ENCODE measurements at regions of chr9 and their contacts with region 1.

Region 1: DNA sequence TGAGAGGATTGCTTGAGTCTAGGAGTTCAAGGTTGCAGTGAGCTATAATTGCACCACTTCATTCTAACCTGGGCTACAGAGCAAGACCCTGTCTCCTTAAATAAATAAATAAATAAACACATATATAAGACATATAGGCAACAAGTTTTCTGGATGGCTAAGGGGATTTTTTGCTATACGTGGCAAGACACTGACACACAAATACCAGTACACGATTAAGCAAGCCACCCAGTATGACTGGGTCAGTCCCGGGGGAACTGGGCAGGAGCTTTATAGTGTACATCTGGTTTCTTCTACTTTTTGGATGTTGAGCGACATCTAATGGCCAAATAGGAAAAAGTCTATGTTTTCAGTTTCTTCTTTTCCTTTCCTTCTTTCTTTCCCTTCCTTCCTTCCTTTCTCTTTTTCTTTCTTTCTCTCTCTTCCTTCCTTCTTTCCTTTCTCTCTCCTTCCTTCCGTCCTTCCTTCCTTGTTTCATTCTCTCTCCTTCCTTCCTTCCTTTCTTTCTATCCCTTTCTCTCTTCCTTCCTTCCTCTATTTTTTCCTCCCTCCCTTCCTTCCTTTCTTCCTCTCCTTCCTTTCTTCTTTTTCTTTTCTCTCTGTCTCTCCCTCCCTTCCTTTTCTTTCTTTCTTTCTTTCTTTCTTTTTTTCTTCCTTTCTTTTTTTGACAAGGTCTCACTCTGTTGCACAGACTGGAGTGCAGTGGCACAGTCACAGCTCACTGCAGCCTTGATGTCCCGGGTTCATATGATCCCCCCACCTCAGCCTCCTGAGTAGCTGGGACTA is 47.0 kb upstream of the PLIN2 start:
- DNase-seq: peak; percentile 69
- ATAC-seq: peak; percentile 96
- H3K4me3 ChIP-seq: peak overlapping the region; percentile 61
- H3K27ac ChIP-seq: no peak overlapping the region
- H3K4me1 ChIP-seq: 0 out of 2 replicates have a peak, but pooled peaks cover 8% of the 10 kb centered on the region
- H3K27me3 ChIP-seq: no peaks in the 10 kb centered on the region
- CTCF ChIP-seq: peak; percentile 57

Region 2: GRCh38 chr9:18849890-18850677 is 324.2 kb before region 1 on chr9:
- CTCF ChIA-PET with region 1: no interaction called
- POLR2A ChIA-PET with region 1: no interaction called
- intact Hi-C with region 1: no loop called
- DNase-seq: no peak
- ATAC-seq: no peak
- H3K4me3 ChIP-seq: no peak overlapping the region
- H3K27ac ChIP-seq: no peak overlapping the region
- H3K4me1 ChIP-seq: no peaks in the 10 kb centered on the region
- H3K27me3 ChIP-seq: no peaks in the 10 kb centered on the region
- CTCF ChIP-seq: no peak

Region 3: GRCh38 chr9:19048966-19049916 is 125.1 kb before region 1 on chr9 and contains the start of gene RRAGA:
- CTCF ChIA-PET with region 1: interaction called, 4 read pairs
- POLR2A ChIA-PET with region 1: interaction called, 3 read pairs
- intact Hi-C with region 1: loop called (anchors 1 kb)
- DNase-seq: peak; percentile 92
- ATAC-seq: peak; percentile 83
- H3K4me3 ChIP-seq: peak within 1 kb of the TSS; percentile 89
- H3K27ac ChIP-seq: peak within 1 kb of the TSS; percentile 68
- H3K4me1 ChIP-seq: peaks cover 15% of the 10 kb centered on the region; the same call in 1 of the 2 replicates
- H3K27me3 ChIP-seq: no peaks in the 10 kb centered on the region
- CTCF ChIP-seq: peak; percentile 76
- total RNA-seq, gene RRAGA: 13.0 and 16.8 TPM in 2 replicates

Region 4: GRCh38 chr9:19102631-19103345 is 71.5 kb before region 1 on chr9 and contains the start of gene HAUS6:
- CTCF ChIA-PET with region 1: no interaction called
- POLR2A ChIA-PET with region 1: no interaction called
- intact Hi-C with region 1: loop called (anchors 5 kb)
- DNase-seq: peak; percentile 91
- ATAC-seq: peak; percentile 94
- H3K4me3 ChIP-seq: peak within 1 kb of the TSS; percentile 83
- H3K27ac ChIP-seq: peak within 1 kb of the TSS; percentile 31
- H3K4me1 ChIP-seq: peaks cover 7% of the 10 kb centered on the region; the same call in 1 of the 2 replicates
- H3K27me3 ChIP-seq: no peaks in the 10 kb centered on the region
- CTCF ChIP-seq: no peak
- total RNA-seq, gene HAUS6: 12.3 and 14.4 TPM in 2 replicates

Region 5: GRCh38 chr9:19271076-19271475 is 96.8 kb after region 1 on chr9:
- CTCF ChIA-PET with region 1: no interaction called
- POLR2A ChIA-PET with region 1: no interaction called
- intact Hi-C with region 1: no loop called
- DNase-seq: no peak
- ATAC-seq: no peak
- H3K4me3 ChIP-seq: no peak overlapping the region
- H3K27ac ChIP-seq: no peak overlapping the region
- H3K4me1 ChIP-seq: no peaks in the 10 kb centered on the region
- H3K27me3 ChIP-seq: no peaks in the 10 kb centered on the region
- CTCF ChIP-seq: no peak

Region 6: DNA sequence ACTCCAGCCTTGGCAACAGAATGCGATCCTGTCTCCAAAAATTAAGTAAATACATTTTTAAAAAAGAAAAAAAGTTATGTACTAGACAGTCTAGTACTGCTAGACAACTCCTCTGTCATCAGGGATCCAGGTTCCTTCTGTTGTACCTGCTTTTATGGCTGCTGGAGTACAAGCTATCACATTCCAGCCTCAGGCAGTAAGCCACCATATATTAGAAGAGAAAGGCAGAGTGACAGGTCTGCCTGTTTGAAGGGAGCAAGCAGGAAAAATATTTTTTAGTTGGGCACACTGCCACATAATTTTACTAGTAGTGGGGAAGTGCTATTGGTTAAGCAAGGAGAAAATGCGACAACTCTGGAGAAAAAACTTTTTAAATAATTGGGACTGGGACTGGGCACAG is 194.8 kb after region 1 on chr9:
- CTCF ChIA-PET with region 1: no interaction called
- POLR2A ChIA-PET with region 1: no interaction called
- intact Hi-C with region 1: no loop called
- DNase-seq: no peak
- ATAC-seq: no peak
- H3K4me3 ChIP-seq: no peak overlapping the region
- H3K27ac ChIP-seq: no peak overlapping the region
- H3K4me1 ChIP-seq: no peaks in the 10 kb centered on the region
- H3K27me3 ChIP-seq: no peaks in the 10 kb centered on the region
- CTCF ChIP-seq: no peak

Region 7: GRCh38 chr9:19379283-19379682 is 205.0 kb after region 1 on chr9:
- CTCF ChIA-PET with region 1: no interaction called
- POLR2A ChIA-PET with region 1: no interaction called
- intact Hi-C with region 1: no loop called
- DNase-seq: no peak
- ATAC-seq: no peak
- H3K4me3 ChIP-seq: peak overlapping the region; percentile 94
- H3K27ac ChIP-seq: peak overlapping the region; percentile 50
- H3K4me1 ChIP-seq: 0 out of 2 replicates have a peak, but pooled peaks cover 21% of the 10 kb centered on the region
- H3K27me3 ChIP-seq: no peaks in the 10 kb centered on the region
- CTCF ChIP-seq: no peak

Region 8: GRCh38 chr9:19527663-19528062 is 353.3 kb after region 1 on chr9:
- CTCF ChIA-PET with region 1: interaction called, 11 read pairs
- POLR2A ChIA-PET with region 1: no interaction called
- intact Hi-C with region 1: no loop called
- DNase-seq: no peak
- ATAC-seq: no peak
- H3K4me3 ChIP-seq: no peak overlapping the region
- H3K27ac ChIP-seq: no peak overlapping the region
- H3K4me1 ChIP-seq: no peaks in the 10 kb centered on the region
- H3K27me3 ChIP-seq: peaks cover 16% of the 10 kb centered on the region; the same call in 1 of the 2 replicates
- CTCF ChIP-seq: no peak